ENCODE measurements at regions of chr1 and their contacts with region 1.

Region 1: DNA sequence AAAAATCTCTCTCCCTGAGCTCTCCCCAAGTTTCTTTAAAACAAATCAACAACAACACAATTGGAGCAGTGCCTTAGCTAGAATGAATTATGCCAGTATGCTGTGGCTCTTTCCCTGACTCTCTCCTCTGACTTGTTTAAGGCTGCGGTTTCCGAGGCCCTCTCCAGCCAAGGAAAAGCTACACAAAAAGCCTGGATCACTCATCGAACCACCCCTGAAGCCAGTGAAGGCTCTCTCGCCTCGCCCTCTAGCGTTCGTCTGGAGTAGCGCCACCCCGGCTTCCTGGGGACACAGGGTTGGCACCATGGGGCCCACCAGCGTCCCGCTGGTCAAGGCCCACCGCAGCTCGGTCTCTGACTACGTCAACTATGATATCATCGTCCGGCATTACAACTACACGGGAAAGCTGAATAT is 1.9 kb downstream of the S1PR1 start:
- DNase-seq: peak; percentile 80 to 87 (median 82)
- H3K4me3 ChIP-seq: peak overlapping the region; percentile 94 to 97
- H3K4me3 Mint-ChIP-seq: peak overlapping the region; percentile 96 to 100 (median 98)
- H3K27ac ChIP-seq: peak overlapping the region; percentile 90
- H3K27ac Mint-ChIP-seq: peak overlapping the region; percentile 97 to 100 (median 98)
- H3K4me1 ChIP-seq: peaks cover 66% of the 10 kb centered on the region
- H3K4me1 Mint-ChIP-seq: peaks cover 37 to 92% (median 50%) of the 10 kb centered on the region in 4 donors
- H3K27me3 ChIP-seq: no peaks in the 10 kb centered on the region
- H3K27me3 Mint-ChIP-seq: no peaks in the 10 kb centered on the region

Region 2: DNA sequence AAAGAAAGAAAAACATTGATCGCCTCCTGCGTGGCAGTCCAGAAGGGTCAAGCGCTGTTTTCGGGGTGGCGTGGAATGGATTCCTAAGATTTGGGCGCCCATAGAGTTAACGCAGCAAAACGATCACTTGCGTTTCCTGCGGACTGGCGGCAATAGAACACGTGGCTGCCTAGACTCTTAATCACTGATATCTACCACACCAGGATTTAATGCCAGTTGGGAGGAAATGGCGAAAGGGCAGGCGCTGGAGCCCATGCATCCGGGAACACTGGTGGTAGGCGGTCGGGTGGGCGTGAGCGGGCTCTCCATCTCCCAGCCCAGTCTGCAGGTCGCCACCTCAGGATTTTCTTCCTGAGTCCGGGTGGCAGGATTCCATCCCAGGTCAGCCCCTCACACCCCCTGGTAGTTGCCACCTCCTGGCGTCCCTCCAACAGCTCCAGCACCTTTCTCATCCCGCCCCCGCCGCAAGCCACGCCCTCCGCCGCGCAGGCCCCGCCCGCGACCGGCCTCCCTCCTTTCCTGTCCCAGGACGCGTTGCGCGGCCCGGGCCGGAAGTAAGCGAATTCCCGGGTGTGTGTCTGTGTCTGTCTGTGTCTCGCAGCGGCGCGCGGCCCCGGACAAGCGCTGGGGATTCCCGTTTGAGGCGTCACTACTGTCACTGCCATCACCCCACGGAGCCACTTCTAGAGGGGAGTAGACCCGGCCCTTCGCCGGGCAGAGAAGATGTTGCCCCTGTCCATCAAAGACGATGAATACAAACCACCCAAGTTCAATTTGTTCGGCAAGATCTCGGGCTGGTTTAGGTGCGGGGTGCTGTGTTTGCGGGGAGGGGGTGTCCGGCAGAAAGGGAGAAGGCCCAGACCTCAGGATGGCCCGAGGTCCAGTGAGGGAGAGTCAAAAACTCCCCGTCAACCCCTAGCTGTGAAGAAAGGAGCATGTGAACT is 342.9 kb before region 1 on chr1 and contains the start of gene SLC30A7:
- CTCF ChIA-PET with region 1: interaction called, 6 read pairs
- POLR2A ChIA-PET with region 1: interaction called, 81 read pairs
- intact Hi-C with region 1: loop called (anchors 1 kb)
- DNase-seq: peak; percentile 93 to 98 (median 95)
- H3K4me3 ChIP-seq: peak within 1 kb of the TSS; percentile 96 to 98
- H3K4me3 Mint-ChIP-seq: peak within 1 kb of the TSS; percentile 94 to 100 (median 100)
- H3K27ac ChIP-seq: peak within 1 kb of the TSS; percentile 100
- H3K27ac Mint-ChIP-seq: peak within 1 kb of the TSS; percentile 99 to 100 (median 100)
- H3K4me1 ChIP-seq: peaks cover 44% of the 10 kb centered on the region
- H3K4me1 Mint-ChIP-seq: peaks cover 28 to 60% (median 39%) of the 10 kb centered on the region in 4 donors
- H3K27me3 ChIP-seq: no peaks in the 10 kb centered on the region
- H3K27me3 Mint-ChIP-seq: no peaks in the 10 kb centered on the region
- total RNA-seq, gene SLC30A7: 54.9 TPM

Region 3: DNA sequence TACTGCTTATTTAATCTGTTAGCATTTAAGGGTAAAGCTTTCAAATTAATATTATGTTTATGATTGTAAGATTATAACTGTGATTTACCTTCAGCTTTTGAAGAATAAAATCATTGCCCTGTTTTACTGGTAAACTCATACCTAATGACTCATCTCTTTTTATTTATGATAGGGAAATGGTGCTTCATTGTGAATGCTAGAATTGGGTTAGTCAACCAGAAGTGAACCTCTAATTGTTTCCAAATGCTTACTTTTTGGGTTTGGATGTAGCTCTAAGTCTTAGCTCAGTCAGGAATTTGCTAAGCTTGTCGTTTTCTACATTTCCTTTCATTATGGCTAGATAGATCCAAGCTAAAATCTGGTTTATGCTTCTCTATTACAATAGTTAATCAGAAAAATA is 283.4 kb before region 1 on chr1:
- CTCF ChIA-PET with region 1: interaction called, 16 read pairs
- POLR2A ChIA-PET with region 1: interaction called, 99 read pairs
- intact Hi-C with region 1: no loop called
- DNase-seq: no peak
- H3K4me3 ChIP-seq: no peak overlapping the region
- H3K4me3 Mint-ChIP-seq: peak overlapping the region in 1 of 8 donors; percentile 26
- H3K27ac ChIP-seq: no peak overlapping the region
- H3K27ac Mint-ChIP-seq: no peak overlapping the region
- H3K4me1 ChIP-seq: peaks cover 25% of the 10 kb centered on the region
- H3K4me1 Mint-ChIP-seq: peaks cover 38 to 60% (median 43%) of the 10 kb centered on the region in 4 donors
- H3K27me3 ChIP-seq: no peaks in the 10 kb centered on the region
- H3K27me3 Mint-ChIP-seq: no peaks in the 10 kb centered on the region

Region 4: DNA sequence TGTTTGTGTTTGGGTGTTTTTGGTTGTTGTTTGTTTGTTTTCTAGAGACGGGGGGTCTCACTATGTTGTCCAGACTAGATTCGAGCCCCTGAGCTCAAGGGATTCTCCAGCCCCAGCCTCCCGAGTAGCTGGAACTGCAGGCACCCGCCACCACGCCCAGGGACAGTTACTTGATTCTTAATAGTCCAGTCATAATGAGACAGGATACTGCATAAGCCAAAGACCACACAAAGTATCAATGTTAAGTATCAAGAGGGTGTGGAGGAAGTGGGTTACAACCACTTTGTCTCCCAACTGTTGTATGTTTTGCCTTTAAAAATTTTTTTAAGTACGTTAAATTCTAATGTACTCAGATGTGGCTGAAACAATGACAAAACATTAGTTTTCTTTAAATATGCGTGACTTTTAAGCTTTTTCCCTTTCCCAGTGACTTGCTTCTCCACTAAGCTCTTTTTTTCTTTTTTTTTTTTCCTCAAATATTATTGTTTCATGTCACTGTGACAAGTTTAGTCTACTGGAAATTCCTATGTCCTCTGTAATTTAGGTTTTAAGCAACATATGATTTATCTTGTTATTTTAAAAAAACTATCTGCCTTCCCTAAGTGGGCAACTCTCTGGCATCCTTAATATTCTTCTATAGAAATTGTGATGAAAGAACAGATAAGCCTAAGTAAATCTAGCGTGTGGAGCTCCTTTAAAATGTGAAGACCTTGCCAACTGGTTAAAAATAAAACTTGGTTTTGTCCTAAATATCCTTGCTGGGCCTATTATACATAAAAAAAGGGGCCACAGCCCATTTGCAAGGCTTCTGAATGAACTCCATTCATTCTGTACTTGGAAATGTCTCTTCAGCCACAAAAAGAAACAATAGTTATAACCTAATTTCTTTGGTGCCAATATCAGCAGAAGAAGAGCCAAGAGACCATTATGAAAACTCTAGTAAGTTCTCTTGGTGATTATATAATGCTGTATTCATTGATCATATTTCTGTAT is 156.9 kb before region 1 on chr1:
- CTCF ChIA-PET with region 1: interaction called, 8 read pairs
- POLR2A ChIA-PET with region 1: interaction called, 24 read pairs
- intact Hi-C with region 1: no loop called
- DNase-seq: peak in 4 of 5 donors; percentile 44 to 60 (median 51)
- H3K4me3 ChIP-seq: peak overlapping the region in 1 of 2 donors; percentile 19
- H3K4me3 Mint-ChIP-seq: peak overlapping the region; percentile 53 to 89 (median 80)
- H3K27ac ChIP-seq: no peak overlapping the region
- H3K27ac Mint-ChIP-seq: peak overlapping the region; percentile 88 to 95 (median 91)
- H3K4me1 ChIP-seq: peaks cover 35% of the 10 kb centered on the region
- H3K4me1 Mint-ChIP-seq: peaks cover 29 to 67% (median 40%) of the 10 kb centered on the region in 4 donors
- H3K27me3 ChIP-seq: no peaks in the 10 kb centered on the region
- H3K27me3 Mint-ChIP-seq: no peaks in the 10 kb centered on the region

Region 5: GRCh38 chr1:101136739-101137138 is 101.9 kb before region 1 on chr1:
- CTCF ChIA-PET with region 1: interaction called, 105 read pairs
- POLR2A ChIA-PET with region 1: interaction called, 92 read pairs
- intact Hi-C with region 1: loop called (anchors 1 kb)
- DNase-seq: peak in 3 of 5 donors; percentile 26 to 40 (median 32)
- H3K4me3 ChIP-seq: no peak overlapping the region
- H3K4me3 Mint-ChIP-seq: peak overlapping the region in 5 of 8 donors; percentile 26 to 67 (median 37)
- H3K27ac ChIP-seq: no peak overlapping the region
- H3K27ac Mint-ChIP-seq: peak overlapping the region; percentile 42 to 92 (median 77)
- H3K4me1 ChIP-seq: peaks cover 36% of the 10 kb centered on the region
- H3K4me1 Mint-ChIP-seq: peaks cover 32 to 57% (median 41%) of the 10 kb centered on the region in 4 donors
- H3K27me3 ChIP-seq: no peaks in the 10 kb centered on the region
- H3K27me3 Mint-ChIP-seq: no peaks in the 10 kb centered on the region

Region 6: DNA sequence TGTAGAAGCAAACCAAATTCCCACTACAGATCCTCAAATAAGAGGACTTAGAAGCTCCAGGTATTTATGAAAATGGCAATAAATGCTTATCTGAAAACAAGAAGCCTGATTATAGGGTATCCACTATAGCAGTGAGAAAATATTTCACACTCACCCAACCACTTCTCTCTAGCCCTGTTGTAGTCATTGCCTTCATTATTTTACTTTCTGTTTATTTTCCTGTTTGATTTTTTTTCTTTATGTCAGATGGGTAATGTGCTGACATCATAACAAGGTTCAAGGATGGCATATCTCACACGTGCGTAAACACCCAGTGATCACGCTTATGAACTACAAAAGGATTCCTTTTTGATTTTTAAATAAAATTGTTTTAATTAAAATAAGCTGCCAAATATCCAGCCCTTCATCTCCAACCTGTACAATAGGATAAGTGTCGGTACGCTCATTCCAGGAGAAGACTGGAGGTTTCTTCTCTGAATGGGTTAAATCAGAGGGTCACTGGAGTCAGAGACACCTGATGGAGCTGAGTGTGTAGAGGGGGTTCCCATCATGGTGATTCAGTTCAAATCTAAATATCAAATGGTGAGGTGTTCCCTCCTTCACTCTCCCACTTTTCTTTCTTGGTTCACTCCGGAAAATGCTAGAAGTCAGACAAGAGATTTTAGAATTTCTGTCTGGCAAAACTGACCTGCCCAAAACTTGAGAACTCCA is 10.1 kb before region 1 on chr1:
- CTCF ChIA-PET with region 1: interaction called, 10 read pairs
- POLR2A ChIA-PET with region 1: interaction called, 7 read pairs
- intact Hi-C with region 1: no loop called
- DNase-seq: no peak
- H3K4me3 ChIP-seq: no peak overlapping the region
- H3K4me3 Mint-ChIP-seq: peak overlapping the region in 4 of 8 donors; percentile 1 to 43 (median 12)
- H3K27ac ChIP-seq: no peak overlapping the region
- H3K27ac Mint-ChIP-seq: peak overlapping the region in 5 of 7 donors; percentile 19 to 89 (median 73)
- H3K4me1 ChIP-seq: peaks cover 20% of the 10 kb centered on the region
- H3K4me1 Mint-ChIP-seq: peaks cover 25 to 54% (median 40%) of the 10 kb centered on the region in 4 donors
- H3K27me3 ChIP-seq: no peaks in the 10 kb centered on the region
- H3K27me3 Mint-ChIP-seq: no peaks in the 10 kb centered on the region

Region 7: DNA sequence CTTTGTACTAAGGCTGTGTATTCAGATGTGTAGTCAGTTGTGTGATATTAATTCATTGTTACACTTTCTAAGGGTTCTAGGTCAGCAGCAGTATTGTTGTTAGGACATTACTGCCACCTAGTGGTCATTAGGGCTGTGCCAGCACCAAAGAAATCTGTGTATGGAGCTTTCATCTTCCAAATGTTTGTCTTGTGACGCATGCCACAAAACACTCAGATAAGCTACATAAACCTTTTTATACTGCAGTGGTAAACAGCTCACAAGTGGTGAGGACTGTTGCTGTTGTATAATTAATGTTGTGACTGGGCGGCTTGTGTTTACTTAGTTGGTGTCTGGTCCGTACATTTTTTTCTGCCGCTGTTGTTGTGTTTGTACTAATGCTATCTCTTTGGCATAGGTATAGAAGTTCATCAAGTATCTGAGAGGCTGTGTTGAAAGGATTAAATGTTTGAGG is 49.8 kb after region 1 on chr1:
- CTCF ChIA-PET with region 1: interaction called, 442 read pairs
- POLR2A ChIA-PET with region 1: interaction called, 955 read pairs
- intact Hi-C with region 1: loop called (anchors 1 kb)
- DNase-seq: peak; percentile 77 to 82 (median 80)
- H3K4me3 ChIP-seq: no peak overlapping the region
- H3K4me3 Mint-ChIP-seq: peak overlapping the region in 7 of 8 donors; percentile 12 to 78 (median 18)
- H3K27ac ChIP-seq: no peak overlapping the region
- H3K27ac Mint-ChIP-seq: peak overlapping the region; percentile 76 to 87 (median 86)
- H3K4me1 ChIP-seq: peaks cover 89% of the 10 kb centered on the region
- H3K4me1 Mint-ChIP-seq: peaks cover 58 to 90% (median 71%) of the 10 kb centered on the region in 4 donors
- H3K27me3 ChIP-seq: no peaks in the 10 kb centered on the region
- H3K27me3 Mint-ChIP-seq: no peaks in the 10 kb centered on the region

Region 8: GRCh38 chr1:101474039-101474665 is 235.5 kb after region 1 on chr1:
- CTCF ChIA-PET with region 1: no interaction called
- POLR2A ChIA-PET with region 1: no interaction called
- intact Hi-C with region 1: no loop called
- DNase-seq: no peak
- H3K4me3 ChIP-seq: no peak overlapping the region
- H3K4me3 Mint-ChIP-seq: no peak overlapping the region
- H3K27ac ChIP-seq: no peak overlapping the region
- H3K27ac Mint-ChIP-seq: no peak overlapping the region
- H3K4me1 ChIP-seq: no peaks in the 10 kb centered on the region
- H3K4me1 Mint-ChIP-seq: peaks cover 0 to 1% (median 0%) of the 10 kb centered on the region in 4 donors
- H3K27me3 ChIP-seq: no peaks in the 10 kb centered on the region
- H3K27me3 Mint-ChIP-seq: peaks cover 0 to 2% of the 10 kb centered on the region in 2 donors

Region 9: DNA sequence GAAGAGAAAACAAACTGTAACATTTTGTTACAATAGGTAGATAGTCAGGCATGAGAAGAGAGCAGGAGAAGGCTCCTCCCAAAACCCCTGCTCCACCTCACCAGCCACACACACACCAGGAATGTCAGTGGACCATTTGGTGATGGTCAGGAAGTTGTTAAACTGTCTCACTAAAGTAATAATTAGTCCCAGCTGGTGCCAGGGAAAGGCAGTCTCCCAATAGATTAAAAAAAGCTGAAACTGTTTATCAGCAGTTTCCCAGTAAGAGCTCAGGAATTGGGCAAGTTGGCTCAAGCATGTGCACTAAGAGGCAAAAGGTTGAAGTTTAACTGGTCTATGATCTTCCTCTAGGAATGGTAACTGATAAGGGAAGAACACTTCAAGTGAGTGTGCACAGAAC is 1620.0 kb after region 1 on chr1:
- CTCF ChIA-PET with region 1: no interaction called
- POLR2A ChIA-PET with region 1: no interaction called
- intact Hi-C with region 1: no loop called
- DNase-seq: no peak
- H3K4me3 ChIP-seq: no peak overlapping the region
- H3K4me3 Mint-ChIP-seq: no peak overlapping the region
- H3K27ac ChIP-seq: no peak overlapping the region
- H3K27ac Mint-ChIP-seq: no peak overlapping the region
- H3K4me1 ChIP-seq: no peaks in the 10 kb centered on the region
- H3K4me1 Mint-ChIP-seq: no peaks in the 10 kb centered on the region
- H3K27me3 ChIP-seq: no peaks in the 10 kb centered on the region
- H3K27me3 Mint-ChIP-seq: no peaks in the 10 kb centered on the region

Measured in CD4-positive, alpha-beta memory T cell (primary cell).